AG04450 (cell line): ENCODE measurements at regions of chr22 and their contacts with region 1.

Region 1: DNA sequence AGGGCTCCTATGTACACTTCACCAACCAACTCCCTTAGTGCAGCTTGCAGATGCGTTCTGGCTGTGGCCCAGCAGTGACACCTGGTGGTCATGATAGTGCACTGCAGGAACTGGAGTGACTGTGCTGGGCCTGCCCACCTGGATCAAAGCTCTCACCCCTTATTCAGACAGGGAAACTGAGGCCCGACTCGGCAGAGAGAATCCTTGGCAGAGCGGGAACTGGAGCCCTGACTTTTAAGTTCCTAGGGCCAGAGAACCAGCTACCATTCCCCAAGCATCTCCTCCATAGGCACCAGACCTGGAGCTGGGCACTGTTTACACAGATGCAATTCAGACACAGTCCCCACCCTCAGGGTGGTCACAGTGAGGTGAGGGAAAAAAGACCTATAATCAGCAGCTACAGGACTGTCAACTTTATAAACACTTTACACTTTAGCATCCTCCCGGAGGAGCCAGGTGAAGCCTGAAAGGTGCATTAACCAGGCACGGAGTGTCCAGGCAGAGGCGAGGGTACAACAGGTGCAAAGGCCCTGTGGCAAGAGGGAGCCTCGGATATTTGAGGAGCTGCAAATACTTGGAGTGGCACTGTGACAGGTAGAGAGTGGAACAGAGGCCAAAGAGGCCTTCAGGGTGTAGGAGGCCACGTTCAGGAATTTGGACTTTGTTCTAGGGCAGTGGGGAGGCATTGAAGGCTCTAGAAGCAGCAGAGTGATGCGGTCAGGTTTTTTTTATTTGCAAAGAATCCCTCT is 22.0 kb downstream of the RHBDD3 start:
- DNase-seq: peak; percentile 29
- H3K4me3 ChIP-seq: no peak overlapping the region
- H3K27ac ChIP-seq: no peak overlapping the region
- H3K27me3 ChIP-seq: peaks cover 8% of the 10 kb centered on the region
- CTCF ChIP-seq: peak; percentile 99

Region 2: GRCh38 chr22:28855355-28856094 is 390.3 kb before region 1 on chr22:
- CTCF ChIA-PET with region 1: interaction called, 14 read pairs
- POLR2A ChIA-PET with region 1: no interaction called
- DNase-seq: peak; percentile 58
- H3K4me3 ChIP-seq: no peak overlapping the region
- H3K27ac ChIP-seq: no peak overlapping the region
- H3K27me3 ChIP-seq: no peaks in the 10 kb centered on the region
- CTCF ChIP-seq: peak; percentile 97

Region 3: DNA sequence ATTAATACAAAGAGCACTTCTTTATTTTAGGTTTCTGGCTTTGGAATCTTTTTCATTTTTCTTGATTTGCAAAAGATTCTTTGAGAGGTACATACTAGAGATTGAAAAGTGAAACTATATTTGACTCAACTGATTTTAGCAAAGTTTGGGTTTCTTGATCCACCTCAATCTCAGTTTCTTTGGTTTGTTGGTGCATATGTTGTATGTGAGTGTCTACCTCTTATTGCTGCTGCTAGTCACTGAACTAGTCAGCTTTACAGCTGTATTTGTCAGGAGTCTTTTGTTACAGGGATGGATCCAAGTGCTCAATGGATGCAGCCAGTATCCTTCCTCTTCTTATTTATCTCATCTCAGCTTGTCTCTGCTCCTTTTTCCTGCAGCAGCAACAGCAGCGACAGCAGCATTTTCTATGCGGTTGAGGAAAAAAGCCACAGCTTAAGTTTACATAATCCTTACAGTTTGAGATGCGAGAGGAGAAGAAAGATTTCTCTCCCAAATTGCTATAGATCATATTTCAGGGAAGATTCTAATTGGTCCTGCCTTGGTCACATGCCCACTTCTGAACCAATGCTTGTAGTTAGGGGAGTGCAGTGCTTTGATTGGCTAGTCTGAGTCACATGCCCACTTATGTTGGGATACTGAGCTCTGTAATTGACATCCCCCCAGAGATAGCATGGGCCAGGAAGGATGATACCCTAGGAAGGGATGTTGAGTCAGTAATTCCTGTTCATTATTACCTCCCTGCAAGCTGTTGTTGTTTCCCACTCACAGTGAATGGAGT is 372.4 kb before region 1 on chr22:
- CTCF ChIA-PET with region 1: no interaction called
- POLR2A ChIA-PET with region 1: no interaction called
- DNase-seq: no peak
- H3K4me3 ChIP-seq: no peak overlapping the region
- H3K27ac ChIP-seq: no peak overlapping the region
- H3K27me3 ChIP-seq: no peaks in the 10 kb centered on the region
- CTCF ChIP-seq: no peak

Region 4: DNA sequence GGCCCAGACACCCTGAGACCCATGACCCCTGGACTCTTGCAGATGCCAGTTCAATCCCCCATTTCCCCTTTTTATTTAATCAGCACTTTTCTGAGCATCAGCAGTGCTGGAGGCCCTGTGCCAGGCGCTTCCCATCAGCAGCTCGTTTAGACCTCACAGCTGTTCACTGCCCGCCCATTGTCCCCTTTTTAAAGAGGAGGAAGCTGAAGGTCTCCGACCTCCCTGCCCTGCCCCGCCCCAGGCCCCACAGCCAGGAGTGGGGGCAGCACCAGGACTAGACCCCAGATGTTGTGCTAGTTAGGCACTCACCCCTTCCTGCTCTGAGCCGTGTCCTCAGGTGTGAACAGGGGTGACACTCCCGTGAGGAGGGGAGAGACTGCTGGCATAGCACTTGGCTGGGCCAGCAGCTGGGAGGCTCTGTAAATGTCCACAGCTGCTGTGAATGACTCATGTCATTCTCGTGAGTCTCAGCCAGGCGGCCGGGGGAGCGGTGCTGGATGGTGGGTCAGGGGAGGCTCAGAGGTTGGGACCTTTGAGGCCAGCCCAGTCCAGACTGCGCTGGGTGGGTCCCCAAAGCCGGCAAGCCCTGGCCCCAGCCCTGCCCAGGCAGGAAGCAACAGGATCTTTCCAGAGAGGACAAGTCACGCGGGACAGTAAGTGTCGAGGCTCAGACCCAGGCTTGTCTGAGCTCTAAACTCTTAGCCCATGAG is 20.2 kb before region 1 on chr22:
- CTCF ChIA-PET with region 1: interaction called, 19 read pairs
- POLR2A ChIA-PET with region 1: no interaction called
- DNase-seq: no peak
- H3K4me3 ChIP-seq: no peak overlapping the region
- H3K27ac ChIP-seq: no peak overlapping the region
- H3K27me3 ChIP-seq: peaks cover 12% of the 10 kb centered on the region
- CTCF ChIP-seq: no peak

Region 5: GRCh38 chr22:29231971-29232959 is 13.5 kb before region 1 on chr22:
- CTCF ChIA-PET with region 1: interaction called, 19 read pairs
- POLR2A ChIA-PET with region 1: no interaction called
- DNase-seq: no peak
- H3K4me3 ChIP-seq: no peak overlapping the region
- H3K27ac ChIP-seq: no peak overlapping the region
- H3K27me3 ChIP-seq: peaks cover 12% of the 10 kb centered on the region
- CTCF ChIP-seq: no peak